ENCODE measurements at regions of chr15 and their contacts with region 1.

Region 1: GRCh38 chr15:99704444-99704838 is 28.8 kb downstream of the LYSMD4 start:
- DNase-seq: peak; percentile 40
- H3K4me3 Mint-ChIP-seq: no peak overlapping the region
- H3K27ac Mint-ChIP-seq: no peak overlapping the region
- H3K4me1 Mint-ChIP-seq: peaks cover 58% of the 10 kb centered on the region
- H3K27me3 Mint-ChIP-seq: no peaks in the 10 kb centered on the region

Region 2: DNA sequence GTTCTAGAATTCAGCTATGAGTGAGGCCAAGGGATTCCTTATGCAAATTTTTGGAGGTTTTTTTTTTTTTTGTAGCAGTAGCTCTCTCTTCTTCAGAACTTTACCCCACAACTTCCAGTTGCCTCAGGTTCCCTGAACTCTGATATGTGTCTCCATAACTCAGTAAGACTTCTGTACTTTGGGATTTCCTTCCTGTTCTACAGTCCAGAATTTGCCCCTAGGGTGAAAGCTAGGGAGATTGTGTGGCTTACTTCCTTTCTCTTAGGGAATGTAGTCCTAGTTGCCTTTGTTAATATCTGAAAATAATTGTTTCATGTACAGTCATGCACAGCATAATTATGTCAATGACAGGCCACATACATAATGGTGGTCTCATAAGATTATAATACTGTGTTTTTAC is 422.3 kb before region 1 on chr15:
- intact Hi-C with region 1: loop called (anchors 1 kb)
- DNase-seq: no peak
- H3K4me3 Mint-ChIP-seq: no peak overlapping the region
- H3K27ac Mint-ChIP-seq: peak overlapping the region; percentile 63
- H3K4me1 Mint-ChIP-seq: peaks cover 68% of the 10 kb centered on the region
- H3K27me3 Mint-ChIP-seq: no peaks in the 10 kb centered on the region

Region 3: GRCh38 chr15:99371180-99372103 is 333.0 kb before region 1 on chr15:
- intact Hi-C with region 1: loop called (anchors 2 kb)
- DNase-seq: no peak
- H3K4me3 Mint-ChIP-seq: peak overlapping the region; percentile 20
- H3K27ac Mint-ChIP-seq: peak overlapping the region; percentile 69
- H3K4me1 Mint-ChIP-seq: peaks cover 29% of the 10 kb centered on the region
- H3K27me3 Mint-ChIP-seq: no peaks in the 10 kb centered on the region

Region 4: GRCh38 chr15:99504823-99505551 is 199.5 kb before region 1 on chr15:
- intact Hi-C with region 1: loop called (anchors 1 kb)
- DNase-seq: no peak
- H3K4me3 Mint-ChIP-seq: no peak overlapping the region
- H3K27ac Mint-ChIP-seq: peak overlapping the region; percentile 73
- H3K4me1 Mint-ChIP-seq: peaks cover 60% of the 10 kb centered on the region
- H3K27me3 Mint-ChIP-seq: no peaks in the 10 kb centered on the region

Region 5: GRCh38 chr15:99605490-99605931 is 98.9 kb before region 1 on chr15:
- intact Hi-C with region 1: loop called (anchors 5 kb)
- DNase-seq: no peak
- H3K4me3 Mint-ChIP-seq: no peak overlapping the region
- H3K27ac Mint-ChIP-seq: peak overlapping the region; percentile 82
- H3K4me1 Mint-ChIP-seq: peaks cover 33% of the 10 kb centered on the region
- H3K27me3 Mint-ChIP-seq: no peaks in the 10 kb centered on the region

Region 6: GRCh38 chr15:99733268-99734039 is 29.0 kb after region 1 on chr15 and contains the start of gene LYSMD4:
- intact Hi-C with region 1: loop called (anchors 1 kb)
- DNase-seq: peak; percentile 97
- H3K4me3 Mint-ChIP-seq: peak within 1 kb of the TSS; percentile 86
- H3K27ac Mint-ChIP-seq: peak within 1 kb of the TSS; percentile 88
- H3K4me1 Mint-ChIP-seq: peaks cover 34% of the 10 kb centered on the region
- H3K27me3 Mint-ChIP-seq: no peaks in the 10 kb centered on the region
- total RNA-seq, gene LYSMD4: 10.1 and 10.3 TPM in 2 replicates

Measured in activated T-helper 1 cell treated with anti-CD3 and anti-CD28 coated beads, Interleukin-12 subunit alpha, Interleukin-12 subunit beta, Interleukin-2, Interleukin-4 antibody, amounts not matched to agents 30 ng/mL and 10 ng/mL and 1 ng/mL, durations not matched to agents 14 hours and 24 hours and 36 hours (primary cell).